MCF 10A (cell line): ENCODE measurements at regions of chr21 and their contacts with region 1.

Region 1: GRCh38 chr21:29145354-29145782 is 14.9 kb downstream of the MAP3K7CL start:
- DNase-seq: peak; percentile 91
- H3K4me3 Mint-ChIP-seq: peak overlapping the region; percentile 39
- H3K27ac Mint-ChIP-seq: peak overlapping the region; percentile 92
- H3K4me1 Mint-ChIP-seq: peaks cover 23% of the 10 kb centered on the region
- H3K27me3 Mint-ChIP-seq: no peaks in the 10 kb centered on the region
- CTCF ChIP-seq: no peak

Region 2: GRCh38 chr21:29098156-29098555 is 47.2 kb before region 1 on chr21:
- CTCF ChIA-PET with region 1: interaction called, 3 read pairs
- POLR2A ChIA-PET with region 1: interaction called, 58 read pairs
- intact Hi-C with region 1: loop called (anchors 5 kb)
- DNase-seq: no peak
- H3K4me3 Mint-ChIP-seq: no peak overlapping the region
- H3K27ac Mint-ChIP-seq: no peak overlapping the region
- H3K4me1 Mint-ChIP-seq: peaks cover 6% of the 10 kb centered on the region
- H3K27me3 Mint-ChIP-seq: no peaks in the 10 kb centered on the region
- CTCF ChIP-seq: no peak

Region 3: GRCh38 chr21:29114765-29115164 is 30.6 kb before region 1 on chr21:
- CTCF ChIA-PET with region 1: no interaction called
- POLR2A ChIA-PET with region 1: interaction called, 25 read pairs
- intact Hi-C with region 1: no loop called
- DNase-seq: peak; percentile 92
- H3K4me3 Mint-ChIP-seq: no peak overlapping the region
- H3K27ac Mint-ChIP-seq: peak overlapping the region; percentile 57
- H3K4me1 Mint-ChIP-seq: no peaks in the 10 kb centered on the region
- H3K27me3 Mint-ChIP-seq: no peaks in the 10 kb centered on the region
- CTCF ChIP-seq: no peak

Region 4: DNA sequence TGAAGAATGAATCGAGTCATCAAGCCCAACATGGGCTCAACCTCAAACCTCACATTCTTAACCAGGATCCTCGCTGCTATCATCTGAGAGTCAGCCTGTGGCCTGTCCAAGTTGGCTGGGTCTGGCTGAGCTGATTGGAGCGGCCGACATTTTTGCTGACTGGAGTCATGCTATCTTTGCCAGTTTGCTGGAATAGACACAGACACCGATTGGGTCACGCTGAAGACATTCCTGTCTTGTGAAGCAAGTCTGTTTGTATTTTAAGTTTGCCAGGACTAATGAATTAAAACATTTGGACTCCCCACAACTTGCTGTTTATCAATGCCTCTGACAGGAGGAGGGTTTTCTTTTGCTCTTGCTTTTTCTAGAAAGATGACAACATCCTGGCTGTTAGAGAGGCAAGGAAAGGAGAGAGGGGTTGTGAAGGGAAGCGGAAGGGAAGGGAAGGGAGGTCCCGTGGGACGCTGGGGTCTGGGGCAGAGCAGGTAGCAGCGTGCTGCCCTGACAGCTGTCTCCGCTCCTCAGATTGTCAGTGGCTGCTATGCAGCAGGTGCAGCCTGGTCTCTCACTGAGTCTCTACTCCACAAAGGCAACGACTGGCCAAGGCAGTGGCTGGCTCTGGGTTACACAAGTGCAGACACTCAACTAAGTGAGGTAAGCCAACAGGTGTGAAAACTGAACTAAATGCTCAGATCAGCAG is 14.9 kb before region 1 on chr21 and contains the start of gene MAP3K7CL:
- CTCF ChIA-PET with region 1: interaction called, 8 read pairs
- POLR2A ChIA-PET with region 1: interaction called, 33 read pairs
- intact Hi-C with region 1: no loop called
- DNase-seq: peak; percentile 66
- H3K4me3 Mint-ChIP-seq: no peak within 1 kb of the TSS
- H3K27ac Mint-ChIP-seq: peak within 1 kb of the TSS; percentile 78
- H3K4me1 Mint-ChIP-seq: peaks cover 10% of the 10 kb centered on the region
- H3K27me3 Mint-ChIP-seq: no peaks in the 10 kb centered on the region
- CTCF ChIP-seq: no peak
- total RNA-seq, gene MAP3K7CL: 4.9 and 6.3 TPM in 2 replicates

Region 5: DNA sequence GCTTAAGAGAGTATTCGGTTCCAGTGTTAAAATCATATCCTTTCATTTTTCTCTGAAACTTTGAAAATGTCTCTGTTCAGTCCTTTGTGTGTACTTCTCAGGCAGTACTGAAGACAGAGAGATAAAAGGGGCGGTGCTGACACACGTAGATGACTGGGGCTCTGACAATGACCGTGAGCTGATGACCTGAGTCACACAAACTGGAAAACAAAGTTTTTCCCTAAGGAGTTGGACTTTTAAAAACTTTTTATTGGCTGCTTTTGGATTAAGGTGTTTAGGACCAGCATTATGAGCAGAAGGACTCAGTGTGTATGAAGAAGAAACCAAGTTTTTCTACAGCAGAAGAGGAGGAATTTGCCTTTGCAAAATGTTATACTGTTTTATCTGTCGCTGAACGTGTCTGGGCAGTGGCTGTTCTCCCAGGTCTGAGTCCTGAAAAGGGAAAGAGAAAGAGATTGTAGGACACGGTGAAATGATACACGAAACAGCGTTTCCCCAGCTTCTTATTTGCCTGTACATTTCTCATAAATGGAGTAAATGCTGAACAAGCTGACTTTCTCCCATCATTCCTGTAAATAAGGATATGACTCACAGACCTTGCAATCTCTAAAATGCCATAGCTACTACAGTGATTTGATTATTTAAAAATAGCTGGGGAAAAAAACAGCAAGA is 36.6 kb after region 1 on chr21:
- CTCF ChIA-PET with region 1: no interaction called
- POLR2A ChIA-PET with region 1: interaction called, 21 read pairs
- intact Hi-C with region 1: no loop called
- DNase-seq: peak; percentile 78
- H3K4me3 Mint-ChIP-seq: peak overlapping the region; percentile 82
- H3K27ac Mint-ChIP-seq: peak overlapping the region; percentile 99
- H3K4me1 Mint-ChIP-seq: peaks cover 31% of the 10 kb centered on the region
- H3K27me3 Mint-ChIP-seq: no peaks in the 10 kb centered on the region
- CTCF ChIP-seq: no peak

Region 6: DNA sequence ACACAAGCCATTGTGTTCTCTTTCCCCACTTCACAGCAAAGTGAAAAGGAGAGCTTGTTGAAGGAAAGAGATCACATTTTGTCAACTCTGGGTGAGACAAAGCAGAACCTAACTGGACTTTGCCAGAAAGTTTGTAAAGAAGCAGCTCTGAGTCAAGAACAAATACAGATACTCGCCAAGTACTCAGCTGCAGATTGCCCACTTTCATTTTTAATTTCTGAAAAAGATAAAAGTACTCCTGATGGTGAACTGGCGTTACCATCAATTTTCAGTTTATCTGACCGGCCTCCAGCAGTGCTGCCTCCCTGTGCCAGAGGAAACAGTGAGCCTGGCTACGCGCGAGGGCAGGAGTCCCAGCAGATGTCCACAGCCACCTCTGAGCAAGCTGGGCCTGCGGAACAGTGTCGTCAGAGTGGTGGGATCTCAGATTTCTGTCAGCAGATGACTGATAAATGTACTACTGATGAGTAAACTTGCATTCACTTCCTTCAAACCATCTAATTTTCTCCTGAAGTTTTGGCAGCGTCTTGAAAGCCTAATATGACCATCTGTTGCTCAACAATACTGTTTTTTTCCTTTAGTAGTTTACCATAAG is 197.1 kb after region 1 on chr21:
- CTCF ChIA-PET with region 1: no interaction called
- POLR2A ChIA-PET with region 1: interaction called, 12 read pairs
- intact Hi-C with region 1: no loop called
- DNase-seq: peak; percentile 94
- H3K4me3 Mint-ChIP-seq: peak overlapping the region; percentile 60
- H3K27ac Mint-ChIP-seq: peak overlapping the region; percentile 84
- H3K4me1 Mint-ChIP-seq: peaks cover 34% of the 10 kb centered on the region
- H3K27me3 Mint-ChIP-seq: no peaks in the 10 kb centered on the region
- CTCF ChIP-seq: no peak